ENCODE measurements at regions of chr21 and their contacts with region 1.

Region 1: GRCh38 chr21:36149788-36150711 is 6.6 kb upstream of the DOP1B start:
- DNase-seq: peak; percentile 49
- CTCF ChIP-seq: no peak

Region 2: DNA sequence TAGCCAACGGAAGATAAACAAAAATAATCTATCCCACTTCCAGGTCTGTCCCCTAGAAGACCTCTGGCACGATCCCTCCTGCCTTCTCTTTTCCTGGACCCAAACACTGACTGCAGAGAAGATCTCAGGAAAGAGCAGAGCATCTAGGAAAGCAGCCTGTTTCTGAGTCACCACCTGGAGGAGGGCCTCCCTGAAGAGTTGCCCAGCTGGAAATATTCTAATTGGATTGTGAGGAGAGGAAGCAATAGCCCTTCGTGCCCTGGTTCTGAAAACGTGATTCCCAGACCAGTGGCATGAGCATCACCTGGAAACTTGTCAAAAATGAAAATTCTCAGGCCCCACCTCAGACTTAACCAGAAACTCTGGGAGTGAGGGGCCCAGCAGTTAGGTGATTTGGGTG is 500.9 kb before region 1 on chr21:
- in situ Hi-C with region 1: no loop called
- DNase-seq: no peak
- CTCF ChIP-seq: no peak

Region 3: GRCh38 chr21:35868005-35868868 is 281.8 kb before region 1 on chr21:
- in situ Hi-C with region 1: no loop called
- DNase-seq: no peak
- CTCF ChIP-seq: no peak

Region 4: GRCh38 chr21:36330904-36331303 is 180.9 kb after region 1 on chr21:
- in situ Hi-C with region 1: loop called (anchors 5 kb)
- DNase-seq: peak; percentile 65
- CTCF ChIP-seq: peak; percentile 76

Region 5: DNA sequence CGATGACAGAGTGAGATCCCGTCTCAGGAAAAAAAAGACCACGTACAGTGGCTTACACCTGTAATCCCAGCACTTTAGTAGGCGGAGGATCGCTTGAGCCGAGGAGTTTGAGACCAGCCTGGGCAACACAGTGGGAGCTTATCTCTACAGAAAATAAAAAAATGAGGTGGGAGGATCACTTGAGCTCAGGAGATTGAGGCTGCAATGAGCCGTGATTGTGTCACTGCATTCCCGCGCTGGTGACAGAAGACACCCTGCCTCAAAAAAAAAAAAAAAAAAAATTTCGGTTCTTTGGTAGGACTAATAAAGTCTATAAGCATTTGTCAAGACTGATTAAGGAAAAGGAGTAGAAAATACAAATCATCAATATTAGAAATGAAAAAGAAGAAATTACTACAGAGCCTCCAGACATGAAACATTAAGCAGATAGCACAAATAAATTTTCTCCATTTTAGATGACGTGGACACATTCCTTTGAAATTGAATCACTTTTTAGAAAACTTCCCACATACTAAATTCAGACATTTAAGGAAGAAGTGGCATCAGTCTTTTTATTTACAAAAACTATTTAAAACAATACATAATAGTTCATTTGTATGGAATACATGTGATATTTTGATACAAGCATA is 200.3 kb after region 1 on chr21:
- in situ Hi-C with region 1: no loop called
- DNase-seq: no peak
- CTCF ChIP-seq: no peak

Region 6: DNA sequence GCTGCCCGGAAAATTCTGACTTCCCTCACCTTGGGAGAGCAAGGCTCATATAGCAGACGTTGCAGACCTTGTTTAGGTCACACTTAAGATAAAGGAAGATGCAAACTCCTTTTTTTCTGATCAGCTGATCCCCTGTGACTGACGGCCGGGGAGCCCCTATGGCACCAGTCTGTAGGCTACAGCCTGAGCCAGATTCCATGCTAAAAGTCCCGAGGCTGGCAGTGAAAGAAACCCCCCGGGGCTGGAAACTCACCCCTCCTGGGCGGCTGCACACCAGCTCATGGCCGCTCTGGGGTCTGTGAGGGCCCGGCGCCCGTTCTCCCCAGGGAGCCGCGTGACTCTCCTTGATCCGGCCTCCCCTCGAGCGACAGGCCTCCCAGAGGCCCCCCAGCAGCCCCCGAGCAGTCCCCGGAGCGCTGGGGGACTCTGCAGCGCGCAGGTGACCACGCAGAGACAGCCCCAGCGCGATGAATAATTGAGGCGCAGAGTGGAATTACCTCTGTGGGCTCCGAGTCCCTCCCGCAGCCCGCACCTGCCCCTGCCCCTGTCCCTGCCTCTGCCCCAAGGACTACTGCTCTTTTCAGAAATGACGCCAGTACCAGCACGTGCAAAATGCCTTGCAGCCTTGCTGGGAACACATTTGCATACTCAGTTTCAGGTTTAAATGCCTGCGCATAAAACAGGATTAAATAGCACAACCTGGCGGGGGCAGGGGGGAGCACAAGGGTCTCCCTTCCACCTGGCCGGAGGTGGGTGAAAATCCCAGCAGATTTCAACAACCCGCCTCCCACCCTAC is 392.5 kb after region 1 on chr21:
- in situ Hi-C with region 1: no loop called
- DNase-seq: peak; percentile 82
- CTCF ChIP-seq: peak; percentile 45